Endothelial cell of umbilical vein (primary cell): ENCODE measurements at regions of chr3 and their contacts with region 1.

Region 1: DNA sequence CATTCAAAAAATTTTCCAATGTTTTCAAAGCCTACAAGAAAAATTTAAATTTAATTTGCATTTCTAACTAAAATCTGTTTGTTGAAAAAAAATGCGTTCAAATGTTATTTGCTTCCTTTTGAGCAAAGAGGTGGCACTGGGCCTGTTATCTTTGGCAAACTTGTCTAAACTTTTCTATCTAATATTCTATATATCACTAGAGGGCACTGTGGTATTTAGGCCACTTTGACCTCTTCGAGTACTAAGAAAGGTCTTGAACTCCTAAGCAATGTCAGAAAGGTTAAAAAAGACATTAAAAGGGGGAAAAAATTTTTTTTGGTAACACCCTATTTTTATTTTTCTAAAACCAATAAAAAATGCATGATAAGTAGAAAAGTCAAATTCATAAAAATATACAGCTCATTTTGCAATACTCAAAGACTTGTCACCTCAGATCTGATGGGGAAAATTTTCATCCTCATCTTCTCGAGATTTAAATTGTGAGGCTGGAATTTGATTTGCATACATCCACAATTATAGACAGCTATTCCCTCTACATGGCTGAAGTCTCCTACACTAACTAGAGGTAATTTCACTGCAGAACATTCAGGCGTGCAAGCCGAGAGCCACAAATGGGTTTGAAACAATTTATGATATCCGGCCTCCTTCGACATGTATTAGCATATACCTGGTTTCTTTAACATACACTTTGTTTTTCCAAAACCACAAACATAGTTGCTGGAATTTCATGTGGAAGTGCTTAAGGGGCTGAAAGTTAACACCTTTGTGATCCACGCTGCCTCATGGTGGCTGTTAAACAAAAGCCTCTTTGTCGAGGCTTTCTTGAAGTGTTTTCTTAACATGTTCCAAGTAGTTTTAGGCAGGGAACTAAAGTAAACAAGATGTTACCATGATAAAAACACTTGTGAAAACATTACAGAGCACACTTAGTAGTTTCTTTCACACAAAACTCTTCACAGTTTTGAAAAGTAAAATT is 576.4 kb downstream of the FOXP1 start:
- DNase-seq: peak; percentile 75
- H3K4me3 ChIP-seq: no peak overlapping the region
- H3K27ac ChIP-seq: peak overlapping the region; percentile 53
- H3K4me1 ChIP-seq: peaks cover 54% of the 10 kb centered on the region
- H3K27me3 ChIP-seq: no peaks in the 10 kb centered on the region
- CTCF ChIP-seq: peak in 1 of 2 donors; percentile 15
- POLR2A ChIP-seq: no peak

Region 2: GRCh38 chr3:70994644-70995043 is 12.5 kb before region 1 on chr3:
- CTCF ChIA-PET with region 1: interaction called, 16 read pairs
- POLR2A ChIA-PET with region 1: no interaction called
- dilution Hi-C with region 1: no loop called
- intact Hi-C with region 1: no loop called
- DNase-seq: no peak
- H3K4me3 ChIP-seq: no peak overlapping the region
- H3K27ac ChIP-seq: no peak overlapping the region
- H3K4me1 ChIP-seq: peaks cover 13% of the 10 kb centered on the region
- H3K27me3 ChIP-seq: no peaks in the 10 kb centered on the region
- CTCF ChIP-seq: no peak
- POLR2A ChIP-seq: no peak

Region 3: GRCh38 chr3:71022551-71023335 is 15.6 kb after region 1 on chr3:
- CTCF ChIA-PET with region 1: interaction called, 17 read pairs
- POLR2A ChIA-PET with region 1: no interaction called
- dilution Hi-C with region 1: no loop called
- intact Hi-C with region 1: no loop called
- DNase-seq: peak; percentile 52
- H3K4me3 ChIP-seq: no peak overlapping the region
- H3K27ac ChIP-seq: no peak overlapping the region
- H3K4me1 ChIP-seq: no peaks in the 10 kb centered on the region
- H3K27me3 ChIP-seq: no peaks in the 10 kb centered on the region
- CTCF ChIP-seq: peak; percentile 20 to 30
- POLR2A ChIP-seq: no peak

Region 4: GRCh38 chr3:71069797-71070196 is 62.7 kb after region 1 on chr3:
- CTCF ChIA-PET with region 1: interaction called, 5 read pairs
- POLR2A ChIA-PET with region 1: no interaction called
- dilution Hi-C with region 1: no loop called
- intact Hi-C with region 1: loop called (anchors 1 kb)
- DNase-seq: peak; percentile 74
- H3K4me3 ChIP-seq: no peak overlapping the region
- H3K27ac ChIP-seq: no peak overlapping the region
- H3K4me1 ChIP-seq: peaks cover 30% of the 10 kb centered on the region
- H3K27me3 ChIP-seq: no peaks in the 10 kb centered on the region
- CTCF ChIP-seq: peak; percentile 42 to 52
- POLR2A ChIP-seq: no peak

Region 5: DNA sequence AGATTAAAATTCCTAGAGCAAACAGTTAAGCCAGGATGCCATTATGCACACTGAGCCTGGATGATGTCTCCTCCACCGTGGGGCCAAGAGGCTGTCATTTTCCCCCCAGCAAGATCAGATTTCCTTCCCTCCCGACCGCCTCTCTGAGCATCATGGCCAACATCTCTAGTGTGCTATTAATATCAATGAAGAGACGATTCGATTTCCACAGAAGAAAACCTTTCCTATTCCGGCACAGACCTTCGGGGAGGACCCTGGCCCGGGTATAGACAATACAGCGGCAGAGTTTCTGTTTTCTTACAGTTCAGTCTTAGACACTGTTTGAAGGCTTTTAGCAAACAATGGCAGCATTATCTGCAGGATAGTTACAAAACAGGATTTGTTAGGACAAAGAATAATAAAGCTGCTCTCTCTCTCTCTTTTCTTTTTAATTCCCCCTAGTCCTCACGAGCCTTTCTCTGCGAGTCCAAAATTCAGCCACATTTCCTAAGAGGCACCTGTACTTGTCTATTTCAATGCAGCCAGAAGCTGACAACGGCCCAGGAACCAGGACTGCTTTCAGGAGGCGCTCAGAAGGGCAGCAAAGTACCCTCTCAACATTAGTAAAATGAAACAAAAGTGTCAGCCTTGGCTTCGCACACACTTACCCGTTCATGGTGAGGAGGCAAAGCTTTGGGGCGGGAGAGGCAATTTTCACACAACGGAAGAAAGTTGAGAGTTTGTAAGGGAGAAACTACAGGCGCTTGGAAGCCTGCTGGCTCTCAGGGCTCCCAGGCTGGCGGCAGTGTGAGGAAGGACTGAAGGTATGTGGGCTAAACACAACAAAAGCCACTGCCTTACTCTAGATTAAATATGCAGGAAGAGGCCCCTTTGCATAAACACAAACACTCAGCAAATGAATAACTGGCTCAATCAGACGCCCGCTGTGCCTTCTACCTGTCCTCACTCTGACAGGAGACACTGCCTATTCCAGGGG is 298.4 kb after region 1 on chr3:
- CTCF ChIA-PET with region 1: interaction called, 3 read pairs
- POLR2A ChIA-PET with region 1: no interaction called
- dilution Hi-C with region 1: no loop called
- intact Hi-C with region 1: loop called (anchors 1 kb)
- DNase-seq: peak; percentile 71
- H3K4me3 ChIP-seq: peak overlapping the region; percentile 24 to 60 (median 41)
- H3K27ac ChIP-seq: peak overlapping the region; percentile 19
- H3K4me1 ChIP-seq: peaks cover 24% of the 10 kb centered on the region
- H3K27me3 ChIP-seq: no peaks in the 10 kb centered on the region
- CTCF ChIP-seq: no peak
- POLR2A ChIP-seq: no peak

Region 6: GRCh38 chr3:71345429-71346040 is 338.4 kb after region 1 on chr3:
- CTCF ChIA-PET with region 1: no interaction called
- POLR2A ChIA-PET with region 1: no interaction called
- dilution Hi-C with region 1: no loop called
- intact Hi-C with region 1: no loop called
- DNase-seq: no peak
- H3K4me3 ChIP-seq: no peak overlapping the region
- H3K27ac ChIP-seq: no peak overlapping the region
- H3K4me1 ChIP-seq: peaks cover 5% of the 10 kb centered on the region
- H3K27me3 ChIP-seq: no peaks in the 10 kb centered on the region
- CTCF ChIP-seq: no peak
- POLR2A ChIP-seq: no peak

Region 7: GRCh38 chr3:71512000-71512399 is 504.9 kb after region 1 on chr3:
- CTCF ChIA-PET with region 1: no interaction called
- POLR2A ChIA-PET with region 1: no interaction called
- dilution Hi-C with region 1: no loop called
- intact Hi-C with region 1: loop called (anchors 5 kb)
- DNase-seq: no peak
- H3K4me3 ChIP-seq: no peak overlapping the region
- H3K27ac ChIP-seq: no peak overlapping the region
- H3K4me1 ChIP-seq: peaks cover 17% of the 10 kb centered on the region
- H3K27me3 ChIP-seq: no peaks in the 10 kb centered on the region
- CTCF ChIP-seq: no peak
- POLR2A ChIP-seq: no peak